Psoas muscle (tissue), 8 donors: ENCODE measurements at regions of chr5 and their contacts with region 1.

Region 1: GRCh38 chr5:59786334-59786824 is 107.1 kb downstream of the PDE4D start:
- DNase-seq: no peak
- ATAC-seq: no peak
- H3K4me3 ChIP-seq: no peak overlapping the region
- H3K27ac ChIP-seq: no peak overlapping the region
- H3K4me1 ChIP-seq: peaks cover 7% of the 10 kb centered on the region
- H3K27me3 ChIP-seq: no peaks in the 10 kb centered on the region
- CTCF ChIP-seq: no peak

Region 2: DNA sequence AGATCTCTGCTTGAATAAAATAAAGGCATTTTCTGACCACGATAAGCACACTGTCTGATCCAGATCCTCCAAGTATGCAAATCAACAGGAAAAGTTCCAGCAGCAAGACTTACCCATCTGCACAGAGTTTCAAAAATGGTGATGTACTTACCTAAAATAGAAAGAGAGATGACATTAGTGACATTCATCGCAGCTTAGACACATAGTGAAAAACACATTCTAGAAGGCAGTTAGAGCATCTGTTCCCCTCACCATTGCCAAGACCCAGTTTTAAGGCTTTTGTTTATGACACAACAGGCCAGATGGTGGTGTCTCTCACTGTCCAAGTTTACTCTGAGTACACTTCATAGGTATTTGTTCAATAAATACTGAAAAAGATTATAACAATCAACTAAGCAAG is 100.6 kb before region 1 on chr5:
- intact Hi-C with region 1: loop called in 1 of 2 experiments (anchors 5 kb)
- DNase-seq: no peak
- ATAC-seq: peak; percentile 82 to 91 (median 86)
- H3K4me3 ChIP-seq: no peak overlapping the region
- H3K27ac ChIP-seq: peak overlapping the region; percentile 57
- H3K4me1 ChIP-seq: peaks cover 11% of the 10 kb centered on the region
- H3K27me3 ChIP-seq: no peaks in the 10 kb centered on the region
- CTCF ChIP-seq: no peak